ENCODE measurements at regions of chr20 and their contacts with region 1.

Region 1: GRCh38 chr20:41232973-41233926 is 84.3 kb downstream of the ZHX3 start:
- DNase-seq: no peak
- ATAC-seq: no peak
- H3K4me3 ChIP-seq: no peak overlapping the region
- H3K4me3 Mint-ChIP-seq: no peak overlapping the region
- H3K27ac ChIP-seq: no peak overlapping the region
- H3K27ac Mint-ChIP-seq: no peak overlapping the region
- H3K4me1 ChIP-seq: peaks cover 11% of the 10 kb centered on the region
- H3K4me1 Mint-ChIP-seq: peaks cover 26% of the 10 kb centered on the region
- H3K27me3 ChIP-seq: no peaks in the 10 kb centered on the region
- H3K27me3 Mint-ChIP-seq: no peaks in the 10 kb centered on the region
- CTCF ChIP-seq: no peak

Region 2: DNA sequence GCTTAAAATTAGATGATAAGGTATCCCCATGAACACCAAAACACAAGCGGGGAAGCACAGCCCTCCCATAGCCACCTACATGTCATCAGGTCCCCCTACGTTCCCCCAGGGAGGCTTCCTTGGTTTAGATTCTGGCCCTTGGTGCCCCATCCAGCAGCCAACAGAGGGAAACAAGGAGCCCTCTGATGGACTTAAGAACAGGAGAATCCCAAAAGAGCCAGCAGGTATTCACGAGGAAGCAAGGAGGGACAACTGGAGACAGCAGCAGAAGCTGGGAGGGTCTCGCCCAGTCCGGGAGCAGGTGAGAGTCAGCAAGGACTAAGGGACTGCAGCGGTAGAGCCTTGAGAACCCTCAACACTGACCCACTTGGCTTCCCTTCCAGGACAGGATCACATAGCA is 263.0 kb before region 1 on chr20:
- CTCF ChIA-PET with region 1: no interaction called
- POLR2A ChIA-PET with region 1: no interaction called
- intact Hi-C with region 1: loop called (anchors 1 to 2 kb)
- DNase-seq: no peak
- ATAC-seq: no peak
- H3K4me3 ChIP-seq: no peak overlapping the region
- H3K4me3 Mint-ChIP-seq: no peak overlapping the region
- H3K27ac ChIP-seq: no peak overlapping the region
- H3K27ac Mint-ChIP-seq: no peak overlapping the region
- H3K4me1 ChIP-seq: peaks cover 9% of the 10 kb centered on the region
- H3K4me1 Mint-ChIP-seq: peaks cover 11% of the 10 kb centered on the region
- H3K27me3 ChIP-seq: no peaks in the 10 kb centered on the region
- H3K27me3 Mint-ChIP-seq: peaks cover 7% of the 10 kb centered on the region
- CTCF ChIP-seq: no peak

Region 3: DNA sequence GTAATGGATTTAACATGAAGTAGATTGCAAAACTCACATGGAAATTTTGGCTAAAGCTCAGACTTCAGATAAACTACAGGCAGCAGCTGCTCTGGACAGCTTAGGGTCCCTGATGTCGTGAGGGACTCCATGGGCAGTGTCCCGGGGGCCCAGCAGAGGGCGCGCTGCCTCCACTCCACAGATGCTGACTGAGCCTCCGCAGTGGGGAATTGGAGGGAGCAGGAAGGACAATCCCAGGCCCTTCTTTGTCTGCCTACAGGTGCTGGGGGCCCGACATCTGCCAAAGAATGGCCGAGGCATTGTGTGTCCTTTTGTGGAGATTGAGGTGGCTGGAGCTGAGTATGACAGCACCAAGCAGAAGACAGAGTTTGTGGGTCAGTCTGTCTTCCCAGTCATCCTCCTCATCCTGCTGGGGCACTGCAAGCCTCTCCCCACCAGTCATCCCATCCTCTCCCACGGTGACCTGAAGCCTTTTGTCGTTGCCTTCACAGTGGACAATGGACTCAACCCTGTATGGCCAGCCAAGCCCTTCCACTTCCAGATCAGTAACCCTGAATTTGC is 60.0 kb before region 1 on chr20:
- CTCF ChIA-PET with region 1: interaction called, 21 read pairs
- POLR2A ChIA-PET with region 1: no interaction called
- intact Hi-C with region 1: loop called (anchors 1 to 2 kb)
- DNase-seq: peak; percentile 49 to 81 (median 62)
- ATAC-seq: peak; percentile 89
- H3K4me3 ChIP-seq: no peak overlapping the region
- H3K4me3 Mint-ChIP-seq: no peak overlapping the region
- H3K27ac ChIP-seq: no peak overlapping the region
- H3K27ac Mint-ChIP-seq: peak overlapping the region; percentile 67
- H3K4me1 ChIP-seq: peaks cover 17% of the 10 kb centered on the region
- H3K4me1 Mint-ChIP-seq: peaks cover 15% of the 10 kb centered on the region
- H3K27me3 ChIP-seq: no peaks in the 10 kb centered on the region
- H3K27me3 Mint-ChIP-seq: no peaks in the 10 kb centered on the region
- CTCF ChIP-seq: peak; percentile 92

Region 4: GRCh38 chr20:41293269-41294037 is 60.2 kb after region 1 on chr20:
- CTCF ChIA-PET with region 1: no interaction called
- POLR2A ChIA-PET with region 1: no interaction called
- intact Hi-C with region 1: no loop called
- DNase-seq: no peak
- ATAC-seq: no peak
- H3K4me3 ChIP-seq: no peak overlapping the region
- H3K4me3 Mint-ChIP-seq: no peak overlapping the region
- H3K27ac ChIP-seq: no peak overlapping the region
- H3K27ac Mint-ChIP-seq: no peak overlapping the region
- H3K4me1 ChIP-seq: no peaks in the 10 kb centered on the region
- H3K4me1 Mint-ChIP-seq: no peaks in the 10 kb centered on the region
- H3K27me3 ChIP-seq: no peaks in the 10 kb centered on the region
- H3K27me3 Mint-ChIP-seq: no peaks in the 10 kb centered on the region
- CTCF ChIP-seq: no peak